ENCODE measurements at regions of chr1 and their contacts with region 1.

Region 1: DNA sequence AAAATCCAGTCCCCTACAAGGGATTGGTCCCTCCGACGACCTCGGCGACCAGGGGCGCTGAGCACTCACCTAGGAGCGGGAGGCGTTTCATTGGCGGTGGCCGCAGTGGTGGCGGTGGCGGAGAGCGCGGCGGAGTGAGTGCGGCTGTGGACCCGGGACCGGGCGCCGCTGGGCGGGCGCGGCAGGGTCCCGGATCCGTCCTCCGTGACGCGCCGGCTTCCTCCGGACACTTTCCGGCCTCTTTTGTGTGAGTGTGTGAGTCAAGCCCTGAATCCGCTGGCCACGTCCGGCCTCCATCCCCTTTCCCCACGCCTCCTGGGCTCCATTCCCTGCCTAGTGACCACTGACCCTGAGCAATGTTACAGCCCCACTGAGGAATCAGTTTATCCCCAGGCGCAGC is at the start of gene ADGRL4:
- DNase-seq: peak; percentile 63 to 77 (median 75)
- ATAC-seq: peak; percentile 85 to 98 (median 93)
- H3K4me3 ChIP-seq: peak within 1 kb of the TSS; percentile 9 to 65 (median 54)
- H3K27ac ChIP-seq: peak within 1 kb of the TSS; percentile 68 to 93 (median 87)
- H3K4me1 ChIP-seq: peaks cover 0 to 13% (median 0%) of the 10 kb centered on the region in 12 donors
- H3K27me3 ChIP-seq: peaks cover 0 to 9% (median 0%) of the 10 kb centered on the region in 9 donors
- CTCF ChIP-seq: no peak
- POLR2A ChIP-seq: peak in 1 of 2 donors; percentile 54
- total RNA-seq, gene ADGRL4: 13.3 to 41.1 (median 17.7) TPM

Region 2: GRCh38 chr1:79079770-79080169 is 73.2 kb after region 1 on chr1:
- intact Hi-C with region 1: loop called in 2 of 10 experiments (anchors 5 to 10 kb)
- DNase-seq: peak in 3 of 5 donors; percentile 35 to 51 (median 39)
- ATAC-seq: peak; percentile 81 to 97 (median 89)
- H3K4me3 ChIP-seq: no peak overlapping the region
- H3K27ac ChIP-seq: peak overlapping the region in 4 of 12 donors; percentile 23 to 56 (median 38)
- H3K4me1 ChIP-seq: peaks cover 0 to 17% (median 0%) of the 10 kb centered on the region in 12 donors
- H3K27me3 ChIP-seq: no peaks in the 10 kb centered on the region
- CTCF ChIP-seq: no peak
- POLR2A ChIP-seq: no peak

Region 3: DNA sequence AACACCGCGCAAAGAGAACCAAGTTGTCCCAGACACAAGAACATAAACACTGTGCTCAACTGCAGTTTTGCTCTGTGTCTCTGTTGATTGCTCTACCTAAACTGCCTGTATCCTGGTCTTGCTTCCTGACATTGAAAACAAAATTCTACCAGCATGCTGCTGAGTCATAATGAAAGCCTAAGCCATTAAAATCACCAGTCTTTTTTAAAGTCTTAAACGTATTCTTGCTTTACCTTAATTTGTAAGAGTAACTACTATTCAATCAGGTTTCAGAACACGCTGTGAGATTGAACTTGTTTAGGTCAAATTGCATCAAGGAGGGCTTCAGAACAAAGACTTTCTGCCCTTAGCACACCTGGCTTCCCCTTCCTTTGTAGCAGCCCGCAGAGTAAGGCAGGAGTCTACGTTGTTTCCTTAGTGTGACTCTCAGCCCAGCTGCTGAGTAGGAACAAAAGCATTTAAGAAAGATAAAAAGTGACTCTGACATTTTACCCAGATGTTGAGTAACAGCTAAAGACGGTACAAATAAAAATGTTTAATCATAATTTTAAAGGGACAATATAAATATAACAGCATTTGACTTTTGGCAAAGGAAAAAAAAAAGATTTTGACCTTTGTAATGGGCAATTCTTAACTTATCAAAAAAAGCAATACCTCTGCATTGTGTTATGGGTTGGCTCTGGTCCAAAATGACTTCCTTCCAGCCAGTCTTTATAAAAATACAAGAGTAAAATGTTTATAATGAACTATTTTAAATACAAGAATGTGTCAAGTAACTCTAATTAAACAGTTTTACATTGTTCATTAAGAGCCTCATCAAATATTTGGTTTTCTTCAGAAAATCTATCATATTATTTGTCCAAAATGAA is 186.9 kb after region 1 on chr1:
- intact Hi-C with region 1: loop called in 1 of 10 experiments (anchors 10 kb)
- DNase-seq: peak in 1 of 5 donors; percentile 18
- ATAC-seq: peak in 3 of 4 donors; percentile 52 to 92 (median 63)
- H3K4me3 ChIP-seq: no peak overlapping the region
- H3K27ac ChIP-seq: peak overlapping the region in 8 of 12 donors; percentile 15 to 65 (median 26)
- H3K4me1 ChIP-seq: peaks cover 0 to 10% (median 0%) of the 10 kb centered on the region in 12 donors
- H3K27me3 ChIP-seq: no peaks in the 10 kb centered on the region
- CTCF ChIP-seq: no peak
- POLR2A ChIP-seq: no peak